Activated B cell treated with CpG ODN at 0.5 μM for 24 hours (primary cell): ENCODE measurements at regions of chr9 and their contacts with region 1.

Region 1: DNA sequence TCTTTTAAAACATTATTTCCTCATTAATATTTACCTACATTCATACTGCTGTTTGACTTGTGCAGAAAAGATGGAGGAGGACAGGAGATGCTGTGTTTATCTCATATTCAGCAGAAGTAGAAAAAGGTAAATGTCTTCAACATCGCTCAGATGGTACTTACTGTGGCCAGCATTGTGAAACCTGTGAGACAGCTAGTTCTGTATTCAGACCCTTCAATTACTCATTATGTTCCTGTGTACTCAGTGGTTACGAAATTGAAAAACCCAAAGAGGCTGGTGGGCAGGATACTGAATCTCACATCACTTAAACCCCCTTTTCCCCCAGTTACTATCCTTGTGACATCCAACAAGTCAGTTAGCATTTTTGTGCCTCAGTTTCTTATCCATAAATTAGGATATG is 216.0 kb downstream of the KDM4C start:
- DNase-seq: no peak
- ATAC-seq: no peak
- H3K4me3 Mint-ChIP-seq: no peak overlapping the region
- H3K27ac Mint-ChIP-seq: peak overlapping the region; percentile 9
- H3K4me1 Mint-ChIP-seq: peaks cover 4% of the 10 kb centered on the region
- H3K27me3 Mint-ChIP-seq: no peaks in the 10 kb centered on the region
- CTCF ChIP-seq: no peak

Region 2: DNA sequence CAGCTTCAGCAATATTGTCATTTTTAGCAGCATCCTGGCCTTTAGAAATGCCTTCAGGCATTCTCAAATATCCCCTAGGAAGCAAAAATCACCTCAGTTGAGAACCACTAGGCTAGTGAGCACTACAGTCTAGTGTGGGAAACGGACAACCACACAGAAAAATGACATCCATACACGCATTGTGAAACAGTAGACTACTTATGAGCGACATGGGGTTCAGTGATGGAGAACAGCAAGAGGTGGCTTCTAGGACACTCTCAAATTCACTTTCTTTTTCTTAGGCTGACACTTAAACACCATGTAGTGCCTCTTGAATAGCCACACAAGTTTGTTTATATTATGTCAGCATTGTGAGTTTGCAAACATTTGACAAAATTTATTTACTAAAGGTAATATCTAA is 13.0 kb before region 1 on chr9:
- CTCF ChIA-PET with region 1: no interaction called
- POLR2A ChIA-PET with region 1: no interaction called
- intact Hi-C with region 1: loop called (anchors 2 kb)
- DNase-seq: no peak
- ATAC-seq: no peak
- H3K4me3 Mint-ChIP-seq: no peak overlapping the region
- H3K27ac Mint-ChIP-seq: no peak overlapping the region
- H3K4me1 Mint-ChIP-seq: peaks cover 22% of the 10 kb centered on the region
- H3K27me3 Mint-ChIP-seq: no peaks in the 10 kb centered on the region
- CTCF ChIP-seq: no peak